ENCODE measurements at regions of chr2 and their contacts with region 1.

Region 1: GRCh38 chr2:173402405-173402974 is 47.8 kb downstream of the CDCA7 start:
- DNase-seq: no peak
- H3K4me3 ChIP-seq: peak overlapping the region; percentile 17 to 26 (median 20)
- H3K27ac ChIP-seq: no peak overlapping the region
- H3K4me1 ChIP-seq: peaks cover 0 to 16% (median 14%) of the 10 kb centered on the region in 4 donors
- H3K27me3 ChIP-seq: peaks cover 0 to 66% (median 18%) of the 10 kb centered on the region in 4 donors
- CTCF ChIP-seq: peak; percentile 72 to 84 (median 84)
- EP300 ChIP-seq: no peak
- POLR2A ChIP-seq: no peak

Region 2: DNA sequence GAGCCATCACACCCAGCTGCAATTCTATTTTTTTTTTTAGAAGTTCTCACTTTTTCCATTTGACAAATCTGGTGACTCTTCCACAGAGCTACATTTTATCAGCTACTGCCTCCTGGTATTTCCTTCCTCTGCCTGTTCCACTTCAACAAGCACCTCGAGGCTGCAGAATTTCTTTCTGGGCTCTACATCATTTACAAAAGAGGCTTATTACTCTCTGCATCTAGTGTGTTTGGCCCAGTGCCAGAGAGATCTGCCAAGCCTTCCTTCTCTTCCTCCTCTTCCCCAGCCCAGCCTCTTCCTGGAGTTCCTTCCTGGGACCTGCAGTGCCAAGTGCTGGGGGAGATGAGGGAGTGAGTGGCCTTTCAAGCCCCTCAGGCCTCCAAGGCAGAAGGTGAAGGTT is 1094.7 kb before region 1 on chr2:
- intact Hi-C with region 1: no loop called
- DNase-seq: no peak
- H3K4me3 ChIP-seq: no peak overlapping the region
- H3K27ac ChIP-seq: peak overlapping the region in 2 of 4 donors; percentile 16 to 17
- H3K4me1 ChIP-seq: peaks cover 0 to 18% (median 7%) of the 10 kb centered on the region in 4 donors
- H3K27me3 ChIP-seq: no peaks in the 10 kb centered on the region
- CTCF ChIP-seq: no peak
- EP300 ChIP-seq: no peak
- POLR2A ChIP-seq: no peak

Region 3: DNA sequence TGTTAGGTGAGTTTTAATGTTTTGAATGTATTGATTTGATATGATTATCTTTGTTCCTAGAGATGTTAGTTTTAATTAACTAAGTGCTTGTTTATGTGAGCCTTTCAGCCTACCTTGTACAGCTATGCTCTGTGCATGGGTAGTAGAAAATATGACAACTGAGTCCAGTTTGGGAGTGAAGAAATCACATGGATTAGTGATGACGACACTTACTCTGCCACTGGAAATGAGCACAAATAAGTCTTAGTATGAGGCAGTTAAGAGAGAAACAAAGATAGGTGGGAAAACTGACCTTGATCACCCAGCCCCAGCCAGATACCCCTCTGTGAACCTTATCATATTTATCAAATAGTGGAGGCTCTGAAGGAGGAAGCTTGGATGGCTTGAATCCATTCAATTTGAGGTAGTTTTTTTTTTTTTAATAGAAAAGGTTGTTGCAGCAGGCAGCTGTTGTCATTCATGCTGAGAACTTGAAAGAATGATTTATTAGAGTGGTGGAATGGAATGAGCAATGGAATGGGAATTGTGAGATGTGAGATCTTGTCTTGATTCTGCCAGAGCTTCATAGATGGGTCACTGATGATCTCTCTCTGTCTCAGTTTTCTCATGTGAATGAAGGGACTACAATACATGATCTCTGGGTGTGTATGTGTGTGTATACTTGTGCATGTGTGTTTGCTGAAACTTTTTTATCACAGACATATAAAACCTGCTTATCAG is 230.4 kb before region 1 on chr2:
- intact Hi-C with region 1: no loop called
- DNase-seq: no peak
- H3K4me3 ChIP-seq: no peak overlapping the region
- H3K27ac ChIP-seq: peak overlapping the region; percentile 8 to 50 (median 23)
- H3K4me1 ChIP-seq: peaks cover 4 to 44% (median 31%) of the 10 kb centered on the region in 4 donors
- H3K27me3 ChIP-seq: no peaks in the 10 kb centered on the region
- CTCF ChIP-seq: no peak
- EP300 ChIP-seq: no peak
- POLR2A ChIP-seq: no peak

Region 4: GRCh38 chr2:173311844-173312606 is 90.5 kb before region 1 on chr2:
- intact Hi-C with region 1: no loop called
- DNase-seq: no peak
- H3K4me3 ChIP-seq: no peak overlapping the region
- H3K27ac ChIP-seq: no peak overlapping the region
- H3K4me1 ChIP-seq: no peaks in the 10 kb centered on the region
- H3K27me3 ChIP-seq: no peaks in the 10 kb centered on the region
- CTCF ChIP-seq: no peak
- EP300 ChIP-seq: no peak
- POLR2A ChIP-seq: no peak

Region 5: GRCh38 chr2:173448938-173449471 is 46.5 kb after region 1 on chr2:
- intact Hi-C with region 1: loop called (anchors 2 kb)
- DNase-seq: no peak
- H3K4me3 ChIP-seq: peak overlapping the region; percentile 32 to 54 (median 41)
- H3K27ac ChIP-seq: peak overlapping the region in 2 of 4 donors; percentile 18 to 56
- H3K4me1 ChIP-seq: peaks cover 4 to 8% (median 6%) of the 10 kb centered on the region in 4 donors
- H3K27me3 ChIP-seq: no peaks in the 10 kb centered on the region
- CTCF ChIP-seq: peak; percentile 65 to 76 (median 74)
- EP300 ChIP-seq: no peak
- POLR2A ChIP-seq: no peak

Region 6: GRCh38 chr2:173898178-173898668 is 495.7 kb after region 1 on chr2:
- intact Hi-C with region 1: no loop called
- DNase-seq: no peak
- H3K4me3 ChIP-seq: no peak overlapping the region
- H3K27ac ChIP-seq: no peak overlapping the region
- H3K4me1 ChIP-seq: no peaks in the 10 kb centered on the region
- H3K27me3 ChIP-seq: no peaks in the 10 kb centered on the region
- CTCF ChIP-seq: no peak
- EP300 ChIP-seq: no peak
- POLR2A ChIP-seq: no peak

Region 7: DNA sequence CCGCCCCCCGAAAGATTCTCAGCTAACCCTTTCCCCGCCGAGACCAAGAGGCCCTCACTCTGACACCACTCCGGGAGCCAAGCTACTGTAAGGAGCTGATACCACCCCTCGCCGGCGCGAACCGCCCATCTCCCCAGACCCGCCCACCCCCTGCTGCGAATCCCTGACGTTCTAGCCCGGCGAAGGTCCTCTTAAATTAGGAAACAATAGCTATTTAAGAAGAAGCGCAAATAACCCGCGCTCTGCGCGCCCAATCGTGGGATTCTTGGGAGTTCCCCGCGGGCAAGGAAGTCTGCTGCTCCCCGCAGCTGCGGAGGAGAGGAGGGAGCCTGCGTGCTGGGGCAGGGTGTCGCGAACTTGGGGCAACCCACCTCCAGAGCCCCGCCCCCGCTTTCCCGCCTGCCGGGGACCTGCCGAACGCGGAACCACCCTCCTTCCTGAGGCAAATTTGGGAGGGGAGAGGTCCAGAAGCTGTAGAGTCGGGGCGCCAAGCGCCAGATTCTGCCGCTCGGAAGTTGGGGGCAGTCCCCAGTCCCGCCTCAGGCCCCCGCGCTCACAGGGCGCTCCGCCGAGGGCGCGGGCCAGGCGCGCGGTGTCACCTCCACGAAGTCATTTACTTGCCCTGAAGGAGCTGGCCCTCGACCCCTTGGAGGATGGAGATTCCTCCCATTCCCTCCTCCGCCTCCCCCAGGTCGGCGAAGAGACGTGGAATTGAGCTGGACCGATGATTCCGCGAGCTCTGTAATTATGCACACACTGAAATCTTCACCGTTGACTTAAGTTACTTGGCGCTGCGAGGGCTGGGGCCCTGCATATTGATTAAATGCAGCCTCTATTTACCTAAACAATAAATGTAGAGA is 923.9 kb after region 1 on chr2:
- intact Hi-C with region 1: loop called (anchors 5 kb)
- DNase-seq: no peak
- H3K4me3 ChIP-seq: peak overlapping the region; percentile 44 to 58 (median 47)
- H3K27ac ChIP-seq: no peak overlapping the region
- H3K4me1 ChIP-seq: peaks cover 26 to 37% (median 31%) of the 10 kb centered on the region in 4 donors
- H3K27me3 ChIP-seq: peaks cover 14 to 86% (median 54%) of the 10 kb centered on the region in 4 donors
- CTCF ChIP-seq: no peak
- EP300 ChIP-seq: no peak
- POLR2A ChIP-seq: no peak